PC-9 (cell line): ENCODE measurements at regions of chr22 and their contacts with region 1.

Region 1: GRCh38 chr22:23569291-23569690 is 10.8 kb downstream of the IGLL1 start:
- DNase-seq: no peak
- H3K4me3 ChIP-seq: no peak overlapping the region
- H3K27ac ChIP-seq: no peak overlapping the region
- H3K4me1 ChIP-seq: no peaks in the 10 kb centered on the region
- H3K27me3 ChIP-seq: peaks cover 47% of the 10 kb centered on the region
- CTCF ChIP-seq: no peak

Region 2: GRCh38 chr22:23857606-23858483 is 288.6 kb after region 1 on chr22 and contains the start of gene SLC2A11:
- CTCF ChIA-PET with region 1: no interaction called
- POLR2A ChIA-PET with region 1: interaction called, 17 read pairs
- intact Hi-C with region 1: no loop called
- DNase-seq: peak; percentile 88 to 89
- H3K4me3 ChIP-seq: peak within 1 kb of the TSS; percentile 77
- H3K27ac ChIP-seq: peak within 1 kb of the TSS; percentile 86
- H3K4me1 ChIP-seq: peaks cover 10% of the 10 kb centered on the region; the same call in 1 of the 2 replicates
- H3K27me3 ChIP-seq: no peaks in the 10 kb centered on the region
- CTCF ChIP-seq: no peak
- total RNA-seq, gene SLC2A11: 24.0 and 26.9 TPM in 2 replicates